IMR-90 (cell line): ENCODE measurements at regions of chr11 and their contacts with region 1.

Region 1: GRCh38 chr11:5808500-5809121 is at the start of gene OR52N2:
- DNase-seq: peak; percentile 65
- ATAC-seq: peak; percentile 99
- H3K4me3 ChIP-seq: peak within 1 kb of the TSS; percentile 45
- H3K27ac ChIP-seq: no peak within 1 kb of the TSS
- H3K4me1 ChIP-seq: no peaks in the 10 kb centered on the region
- H3K27me3 ChIP-seq: peaks cover 7% of the 10 kb centered on the region
- CTCF ChIP-seq: peak; percentile 89
- POLR2A ChIP-seq: no peak
- RAD21 ChIP-seq: peak; percentile 95
- total RNA-seq, gene OR52N2: not detected in 2 replicates

Region 2: GRCh38 chr11:4187055-4187988 is 1621.3 kb before region 1 on chr11:
- CTCF ChIA-PET with region 1: no interaction called
- POLR2A ChIA-PET with region 1: no interaction called
- dilution Hi-C with region 1: no loop called
- in situ Hi-C with region 1: no loop called
- intact Hi-C with region 1: loop called (anchors 10 kb)
- DNase-seq: peak; percentile 70
- ATAC-seq: peak; percentile 98
- H3K4me3 ChIP-seq: peak overlapping the region; percentile 50
- H3K27ac ChIP-seq: peak overlapping the region; percentile 24; the same call in 1 of the 2 replicates
- H3K4me1 ChIP-seq: no peaks in the 10 kb centered on the region; the same call in 1 of the 2 replicates
- H3K27me3 ChIP-seq: no peaks in the 10 kb centered on the region; the same call in 1 of the 2 replicates
- CTCF ChIP-seq: peak; percentile 97
- POLR2A ChIP-seq: peak; percentile 40; the same call in 1 of the 2 replicates
- RAD21 ChIP-seq: peak; percentile 91

Region 3: DNA sequence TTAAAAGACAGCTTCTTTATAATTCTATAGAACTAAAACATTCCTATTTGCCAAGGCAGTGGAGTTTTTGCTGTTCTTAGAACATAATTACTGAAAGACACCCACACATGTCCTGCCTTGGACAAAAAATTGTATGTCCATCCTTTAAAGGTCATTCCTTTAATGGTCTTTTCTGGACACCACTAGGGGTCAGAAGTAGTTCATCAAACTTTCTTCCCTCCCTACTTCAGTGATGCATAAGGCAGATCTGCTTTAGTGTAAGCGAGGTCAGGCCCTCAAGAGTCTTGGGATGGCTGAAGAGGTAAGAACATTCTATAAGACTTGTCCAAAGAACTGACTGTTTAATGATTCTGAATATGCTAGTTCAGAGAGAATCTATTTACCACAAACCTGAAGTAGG is 603.8 kb before region 1 on chr11:
- CTCF ChIA-PET with region 1: no interaction called
- POLR2A ChIA-PET with region 1: no interaction called
- dilution Hi-C with region 1: no loop called
- in situ Hi-C with region 1: no loop called
- intact Hi-C with region 1: loop called (anchors 1 kb)
- DNase-seq: peak; percentile 90
- ATAC-seq: peak; percentile 94
- H3K4me3 ChIP-seq: no peak overlapping the region
- H3K27ac ChIP-seq: no peak overlapping the region
- H3K4me1 ChIP-seq: peaks cover 4% of the 10 kb centered on the region; the same call in 1 of the 2 replicates
- H3K27me3 ChIP-seq: no peaks in the 10 kb centered on the region
- CTCF ChIP-seq: peak; percentile 82
- POLR2A ChIP-seq: no peak
- RAD21 ChIP-seq: peak; percentile 91

Region 4: DNA sequence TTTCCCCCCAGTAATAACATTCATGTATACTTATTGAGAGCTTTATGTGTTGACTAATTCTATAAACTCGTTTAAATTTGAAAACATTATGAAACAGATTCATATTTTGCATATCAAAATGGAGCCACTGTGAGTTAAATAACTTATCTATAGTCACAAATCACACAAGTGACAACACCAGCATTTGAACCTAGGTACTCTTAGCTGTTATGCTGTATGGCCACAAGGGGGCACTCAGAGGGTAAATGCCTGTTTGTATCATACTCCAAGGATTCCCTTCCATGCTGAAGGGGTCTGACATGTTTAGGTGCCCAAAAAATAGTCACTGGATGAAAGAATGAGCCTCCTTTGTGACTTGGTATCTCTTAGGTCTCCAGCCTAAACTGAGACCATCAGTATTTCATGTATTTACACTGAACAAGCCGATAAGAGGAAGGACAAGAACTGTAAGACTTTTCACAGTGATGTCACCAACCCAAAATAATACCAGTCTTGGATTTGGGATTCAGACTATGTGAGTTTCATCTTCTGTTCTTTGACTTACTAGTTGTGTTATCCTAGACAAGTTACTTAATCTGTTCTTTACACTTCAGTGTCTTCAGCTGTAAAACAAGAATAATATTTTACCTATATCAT is 332.3 kb before region 1 on chr11:
- CTCF ChIA-PET with region 1: interaction called, 8 read pairs
- POLR2A ChIA-PET with region 1: no interaction called
- dilution Hi-C with region 1: no loop called
- in situ Hi-C with region 1: loop called (anchors 5 kb)
- intact Hi-C with region 1: loop called (anchors 1 kb)
- DNase-seq: peak; percentile 57
- ATAC-seq: peak; percentile 95
- H3K4me3 ChIP-seq: no peak overlapping the region
- H3K27ac ChIP-seq: no peak overlapping the region
- H3K4me1 ChIP-seq: no peaks in the 10 kb centered on the region
- H3K27me3 ChIP-seq: peaks cover 4% of the 10 kb centered on the region
- CTCF ChIP-seq: peak; percentile 75
- POLR2A ChIP-seq: no peak
- RAD21 ChIP-seq: peak; percentile 77

Region 5: GRCh38 chr11:5684646-5685362 is 123.8 kb before region 1 on chr11 and contains the start of gene TRIM5:
- CTCF ChIA-PET with region 1: interaction called, 4 read pairs
- POLR2A ChIA-PET with region 1: no interaction called
- dilution Hi-C with region 1: no loop called
- in situ Hi-C with region 1: no loop called
- intact Hi-C with region 1: loop called (anchors 2 kb)
- DNase-seq: peak; percentile 99
- ATAC-seq: peak; percentile 95
- H3K4me3 ChIP-seq: peak within 1 kb of the TSS; percentile 56
- H3K27ac ChIP-seq: peak within 1 kb of the TSS; percentile 67
- H3K4me1 ChIP-seq: no peaks in the 10 kb centered on the region
- H3K27me3 ChIP-seq: no peaks in the 10 kb centered on the region
- CTCF ChIP-seq: peak; percentile 58
- POLR2A ChIP-seq: peak; percentile 95
- RAD21 ChIP-seq: peak; percentile 46
- total RNA-seq, gene TRIM5: 49.1 and 58.0 TPM in 2 replicates

Region 6: DNA sequence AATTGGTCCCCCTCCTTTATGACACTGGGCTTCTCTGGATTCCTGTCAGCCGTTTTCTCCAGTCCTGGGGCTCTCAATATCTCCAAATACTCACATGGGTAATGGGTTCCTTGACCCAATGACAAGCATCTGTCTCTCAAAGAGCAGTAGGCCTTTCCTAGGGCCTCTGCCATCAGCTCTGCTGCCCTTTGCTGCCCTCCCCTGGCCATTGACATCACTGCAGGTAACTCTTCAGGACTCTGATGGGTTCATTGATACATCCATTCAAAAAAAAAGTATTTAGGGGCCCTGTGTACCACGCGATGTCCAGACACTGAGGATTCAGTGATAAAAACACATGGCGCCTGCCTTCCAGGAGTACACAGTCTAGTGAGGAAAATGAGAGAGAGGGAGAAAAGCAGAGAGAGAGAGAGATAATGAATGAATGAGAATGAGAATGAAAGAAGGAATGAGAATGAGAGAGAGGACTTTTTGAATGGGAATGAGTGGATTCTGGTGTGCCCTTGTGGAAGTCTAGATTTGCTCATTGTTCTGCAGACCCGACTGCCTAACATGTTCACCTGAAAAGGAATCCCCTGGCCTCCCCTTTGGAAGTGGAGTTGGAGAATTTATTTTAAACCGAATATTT is 1634.1 kb after region 1 on chr11:
- CTCF ChIA-PET with region 1: no interaction called
- POLR2A ChIA-PET with region 1: no interaction called
- dilution Hi-C with region 1: no loop called
- in situ Hi-C with region 1: no loop called
- intact Hi-C with region 1: no loop called
- DNase-seq: peak; percentile 31
- ATAC-seq: peak; percentile 96
- H3K4me3 ChIP-seq: no peak overlapping the region
- H3K27ac ChIP-seq: no peak overlapping the region
- H3K4me1 ChIP-seq: no peaks in the 10 kb centered on the region
- H3K27me3 ChIP-seq: no peaks in the 10 kb centered on the region; the same call in 1 of the 2 replicates
- CTCF ChIP-seq: peak; percentile 71
- POLR2A ChIP-seq: no peak
- RAD21 ChIP-seq: peak; percentile 69